AG04449 (cell line): ENCODE measurements at regions of chr12 and their contacts with region 1.

Region 1: GRCh38 chr12:93502802-93503623 is 35.7 kb downstream of the MRPL42 start:
- DNase-seq: no peak
- H3K4me3 ChIP-seq: no peak overlapping the region
- CTCF ChIP-seq: peak; percentile 55

Region 2: GRCh38 chr12:93453633-93454032 is 49.4 kb before region 1 on chr12:
- CTCF ChIA-PET with region 1: no interaction called
- POLR2A ChIA-PET with region 1: no interaction called
- DNase-seq: peak; percentile 23
- H3K4me3 ChIP-seq: no peak overlapping the region
- CTCF ChIP-seq: no peak

Region 3: DNA sequence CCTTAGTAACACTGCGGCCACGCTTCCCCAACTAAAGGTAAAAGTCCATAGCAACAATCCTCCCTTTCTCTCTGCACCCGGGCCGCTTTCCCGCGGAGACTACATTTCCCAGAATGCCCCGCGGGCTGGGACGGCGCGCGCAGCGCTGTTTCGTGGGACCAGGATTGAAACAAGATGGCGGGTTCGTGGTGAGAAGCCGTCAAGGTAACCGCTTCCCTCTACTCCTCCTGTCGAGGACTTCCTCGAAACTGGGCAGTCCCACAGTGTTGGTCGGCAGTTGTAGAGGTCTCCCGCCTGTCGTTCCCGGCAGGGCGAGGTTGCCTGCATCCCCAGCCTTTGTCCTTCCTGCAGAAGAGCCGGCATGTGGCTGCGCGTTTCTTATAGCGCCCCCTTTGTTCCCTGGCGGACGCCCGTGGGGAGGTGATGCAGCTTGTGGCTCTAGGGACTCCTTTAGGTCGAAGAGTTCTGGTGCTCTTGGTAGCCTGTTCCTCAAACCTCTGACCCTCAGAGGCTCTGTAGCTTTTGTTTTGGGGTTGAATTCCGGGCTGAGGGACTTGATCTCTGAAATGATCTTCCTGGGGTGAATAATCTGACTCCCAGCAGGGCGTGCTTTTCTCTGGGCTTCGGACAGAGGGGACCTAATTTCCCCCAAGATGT is 35.5 kb before region 1 on chr12 and contains the start of gene MRPL42:
- CTCF ChIA-PET with region 1: interaction called, 11 read pairs
- POLR2A ChIA-PET with region 1: interaction called, 3 read pairs
- DNase-seq: peak; percentile 34
- H3K4me3 ChIP-seq: peak within 1 kb of the TSS; percentile 96
- CTCF ChIP-seq: peak; percentile 84

Region 4: DNA sequence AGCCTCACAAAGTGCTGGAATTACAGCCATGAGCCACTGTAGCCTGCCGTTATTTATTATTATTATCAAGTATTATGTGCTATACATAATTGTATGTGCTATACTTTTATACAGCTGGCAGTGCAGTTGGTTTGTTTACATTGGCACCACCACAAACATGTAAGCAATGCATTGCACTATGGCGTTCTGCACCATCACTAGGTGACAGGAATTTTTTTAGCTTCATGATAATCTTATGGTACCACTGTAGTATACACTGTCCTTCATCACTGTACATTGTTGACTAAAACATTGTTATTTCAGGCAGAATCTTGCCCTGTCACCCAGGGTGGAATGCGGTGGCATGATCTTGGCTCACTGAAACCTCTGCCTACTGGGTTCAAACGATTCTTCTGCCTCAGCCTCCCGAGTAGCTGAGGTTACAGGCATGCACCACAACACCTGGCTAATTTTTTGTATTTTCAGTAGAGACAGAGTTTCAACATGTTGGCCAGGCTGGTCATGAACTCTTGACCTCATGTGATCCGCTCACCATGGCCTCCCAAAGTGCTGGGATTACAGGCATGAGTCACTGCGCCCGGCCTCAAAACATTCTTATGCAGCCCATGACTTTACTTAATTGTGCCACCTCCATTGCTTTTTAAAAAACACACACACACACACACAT is 18.6 kb before region 1 on chr12:
- CTCF ChIA-PET with region 1: interaction called, 21 read pairs
- POLR2A ChIA-PET with region 1: no interaction called
- DNase-seq: no peak
- H3K4me3 ChIP-seq: no peak overlapping the region
- CTCF ChIP-seq: no peak

Region 5: DNA sequence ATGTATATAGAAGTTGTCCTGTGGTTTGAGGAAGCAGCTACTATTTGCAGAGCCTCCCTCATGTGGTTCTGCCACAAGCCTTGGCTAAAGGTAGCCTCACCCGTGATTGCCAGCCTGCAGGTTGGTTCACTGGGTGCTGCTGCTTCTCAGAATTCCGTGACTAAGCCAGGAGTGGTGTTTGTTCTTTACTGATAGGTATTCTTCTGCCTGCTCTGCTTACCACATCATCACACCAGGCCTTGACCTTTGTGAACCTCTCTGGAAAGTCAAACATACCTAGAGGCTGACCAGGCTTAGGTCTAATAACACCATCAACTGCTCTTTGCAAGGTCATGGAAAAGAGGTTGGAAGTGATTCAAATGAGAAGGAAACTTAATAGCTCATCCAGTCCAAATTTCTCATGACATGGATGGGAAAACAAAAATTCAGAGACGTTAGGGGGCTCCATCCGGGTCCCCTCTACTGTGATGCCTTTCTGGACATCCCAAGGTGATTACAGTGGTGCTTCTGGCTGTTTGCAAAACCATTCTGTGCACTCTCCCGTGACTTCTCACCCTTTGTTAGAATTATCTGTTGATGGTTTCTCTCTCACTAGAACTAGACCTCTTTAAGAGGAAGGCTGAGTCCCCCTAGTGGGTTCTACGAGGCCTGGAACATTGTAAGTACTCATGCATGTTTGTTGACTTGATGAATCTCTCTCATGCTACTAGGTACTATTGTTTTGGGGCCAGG is 61.0 kb after region 1 on chr12:
- CTCF ChIA-PET with region 1: interaction called, 21 read pairs
- POLR2A ChIA-PET with region 1: no interaction called
- DNase-seq: no peak
- H3K4me3 ChIP-seq: no peak overlapping the region
- CTCF ChIP-seq: peak; percentile 41

Region 6: GRCh38 chr12:93742110-93742934 is 239.3 kb after region 1 on chr12:
- CTCF ChIA-PET with region 1: interaction called, 17 read pairs
- POLR2A ChIA-PET with region 1: no interaction called
- DNase-seq: no peak
- H3K4me3 ChIP-seq: peak overlapping the region; percentile 61
- CTCF ChIP-seq: peak; percentile 13